ENCODE measurements at regions of chr1 and their contacts with region 1.

Region 1: DNA sequence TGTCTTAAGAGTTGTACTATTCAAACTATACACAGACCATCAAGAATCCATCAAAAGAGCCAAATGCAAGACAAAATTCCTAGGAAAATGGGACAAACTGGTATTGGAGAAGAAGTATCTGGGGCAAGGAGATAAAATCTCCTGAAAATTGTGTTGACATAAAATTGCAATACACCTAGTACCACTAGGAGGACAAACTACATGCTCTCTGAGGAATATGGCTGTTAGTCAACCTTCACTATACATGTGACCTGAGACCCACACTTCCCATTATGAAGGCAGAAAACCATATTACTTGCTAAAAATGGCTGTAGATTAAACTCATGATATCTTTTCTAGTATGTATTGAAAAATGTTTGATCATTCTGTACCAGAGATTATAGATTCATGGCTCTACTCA is 30.0 kb downstream of the IRF2BP2 start:
- DNase-seq: no peak
- ATAC-seq: no peak

Region 2: GRCh38 chr1:234288946-234289345 is 291.0 kb before region 1 on chr1:
- intact Hi-C with region 1: no loop called
- DNase-seq: no peak
- ATAC-seq: no peak

Region 3: GRCh38 chr1:234533975-234534876 is 45.7 kb before region 1 on chr1:
- intact Hi-C with region 1: loop called (anchors 10 kb)
- DNase-seq: peak; percentile 97
- ATAC-seq: peak; percentile 70

Region 4: GRCh38 chr1:235776396-235776795 is 1196.4 kb after region 1 on chr1:
- intact Hi-C with region 1: loop called (anchors 5 kb)
- DNase-seq: no peak
- ATAC-seq: no peak

Region 5: GRCh38 chr1:236041631-236042618 is 1462.0 kb after region 1 on chr1:
- intact Hi-C with region 1: no loop called
- DNase-seq: no peak
- ATAC-seq: no peak

Measured in sciatic nerve (tissue), 2 donors.